ENCODE measurements at regions of chr13 and their contacts with region 1.

Region 1: GRCh38 chr13:40789275-40790133 is at the start of gene SLC25A15:
- DNase-seq: peak; percentile 78
- ATAC-seq: peak; percentile 75
- H3K4me3 Mint-ChIP-seq: peak within 1 kb of the TSS; percentile 83
- H3K27ac Mint-ChIP-seq: peak within 1 kb of the TSS; percentile 90
- H3K4me1 Mint-ChIP-seq: peaks cover 41% of the 10 kb centered on the region
- H3K27me3 Mint-ChIP-seq: no peaks in the 10 kb centered on the region
- CTCF ChIP-seq: no peak
- total RNA-seq, gene SLC25A15: 23.2 to 24.6 TPM

Region 2: GRCh38 chr13:40777166-40777808 is 12.2 kb before region 1 on chr13:
- CTCF ChIA-PET with region 1: interaction called, 34 read pairs
- POLR2A ChIA-PET with region 1: interaction called, 15 read pairs
- intact Hi-C with region 1: no loop called
- DNase-seq: peak; percentile 60
- ATAC-seq: peak; percentile 66
- H3K4me3 Mint-ChIP-seq: peak overlapping the region; percentile 62
- H3K27ac Mint-ChIP-seq: peak overlapping the region; percentile 100
- H3K4me1 Mint-ChIP-seq: peaks cover 33% of the 10 kb centered on the region
- H3K27me3 Mint-ChIP-seq: no peaks in the 10 kb centered on the region
- CTCF ChIP-seq: peak; percentile 93

Measured in activated CD8-positive, alpha-beta T cell treated with anti-CD3 and anti-CD28 coated beads for 36 hours (primary cell).